ENCODE measurements at regions of chr7 and their contacts with region 1.

Region 1: GRCh38 chr7:80722616-80723141 is 84.2 kb downstream of the CD36 start:
- DNase-seq: peak; percentile 99
- H3K4me3 Mint-ChIP-seq: peak overlapping the region; percentile 49
- H3K27ac Mint-ChIP-seq: peak overlapping the region; percentile 89
- H3K4me1 Mint-ChIP-seq: peaks cover 42% of the 10 kb centered on the region
- H3K27me3 Mint-ChIP-seq: no peaks in the 10 kb centered on the region
- CTCF ChIP-seq: no peak

Region 2: GRCh38 chr7:80686576-80686975 is 36.1 kb before region 1 on chr7:
- CTCF ChIA-PET with region 1: no interaction called
- POLR2A ChIA-PET with region 1: no interaction called
- intact Hi-C with region 1: no loop called
- DNase-seq: peak; percentile 55
- H3K4me3 Mint-ChIP-seq: no peak overlapping the region
- H3K27ac Mint-ChIP-seq: no peak overlapping the region
- H3K4me1 Mint-ChIP-seq: no peaks in the 10 kb centered on the region
- H3K27me3 Mint-ChIP-seq: no peaks in the 10 kb centered on the region
- CTCF ChIP-seq: no peak

Region 3: GRCh38 chr7:80781561-80781979 is 58.9 kb after region 1 on chr7:
- CTCF ChIA-PET with region 1: interaction called, 7 read pairs
- POLR2A ChIA-PET with region 1: interaction called, 19 read pairs
- intact Hi-C with region 1: loop called (anchors 2 kb)
- DNase-seq: peak; percentile 96
- H3K4me3 Mint-ChIP-seq: peak overlapping the region; percentile 6
- H3K27ac Mint-ChIP-seq: peak overlapping the region; percentile 57
- H3K4me1 Mint-ChIP-seq: peaks cover 52% of the 10 kb centered on the region
- H3K27me3 Mint-ChIP-seq: no peaks in the 10 kb centered on the region
- CTCF ChIP-seq: no peak

Region 4: GRCh38 chr7:80804589-80804988 is 81.9 kb after region 1 on chr7:
- CTCF ChIA-PET with region 1: no interaction called
- POLR2A ChIA-PET with region 1: no interaction called
- intact Hi-C with region 1: no loop called
- DNase-seq: no peak
- H3K4me3 Mint-ChIP-seq: no peak overlapping the region
- H3K27ac Mint-ChIP-seq: no peak overlapping the region
- H3K4me1 Mint-ChIP-seq: peaks cover 4% of the 10 kb centered on the region
- H3K27me3 Mint-ChIP-seq: no peaks in the 10 kb centered on the region
- CTCF ChIP-seq: no peak

Region 5: GRCh38 chr7:81206667-81207360 is 484.1 kb after region 1 on chr7:
- CTCF ChIA-PET with region 1: no interaction called
- POLR2A ChIA-PET with region 1: no interaction called
- intact Hi-C with region 1: no loop called
- DNase-seq: no peak
- H3K4me3 Mint-ChIP-seq: no peak overlapping the region
- H3K27ac Mint-ChIP-seq: no peak overlapping the region
- H3K4me1 Mint-ChIP-seq: peaks cover 12% of the 10 kb centered on the region
- H3K27me3 Mint-ChIP-seq: no peaks in the 10 kb centered on the region
- CTCF ChIP-seq: no peak